Vagina (tissue), 2 donors: ENCODE measurements at regions of chr14 and their contacts with region 1.

Region 1: GRCh38 chr14:67943947-67944346 is 124.4 kb downstream of the RAD51B start:
- DNase-seq: no peak
- H3K4me3 ChIP-seq: no peak overlapping the region
- H3K27ac ChIP-seq: peak overlapping the region; percentile 88
- H3K4me1 ChIP-seq: peaks cover 41% of the 10 kb centered on the region
- H3K27me3 ChIP-seq: no peaks in the 10 kb centered on the region
- CTCF ChIP-seq: peak; percentile 59 to 90 (median 68)
- POLR2A ChIP-seq: no peak

Region 2: DNA sequence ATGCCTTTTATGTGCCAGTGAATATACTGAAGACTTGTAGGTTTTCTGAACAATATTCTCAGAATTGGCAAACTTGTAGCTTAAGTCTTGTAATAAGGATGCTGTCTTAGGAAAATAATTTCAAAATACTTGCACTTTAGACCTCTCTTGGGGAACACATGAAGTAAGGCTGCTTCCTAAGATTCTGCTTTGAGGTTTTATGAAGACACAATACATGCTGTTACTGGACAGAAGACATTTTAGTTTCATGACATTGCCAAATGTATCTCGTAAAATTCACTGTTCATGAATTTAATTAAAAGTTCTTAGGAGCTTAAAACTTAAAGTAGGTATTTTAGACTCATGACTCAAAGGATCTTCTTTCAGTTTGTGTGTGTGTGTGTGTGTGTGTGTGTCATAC is 43.7 kb before region 1 on chr14:
- intact Hi-C with region 1: no loop called
- DNase-seq: no peak
- H3K4me3 ChIP-seq: no peak overlapping the region
- H3K27ac ChIP-seq: no peak overlapping the region
- H3K4me1 ChIP-seq: no peaks in the 10 kb centered on the region
- H3K27me3 ChIP-seq: no peaks in the 10 kb centered on the region
- CTCF ChIP-seq: no peak
- POLR2A ChIP-seq: no peak

Region 3: DNA sequence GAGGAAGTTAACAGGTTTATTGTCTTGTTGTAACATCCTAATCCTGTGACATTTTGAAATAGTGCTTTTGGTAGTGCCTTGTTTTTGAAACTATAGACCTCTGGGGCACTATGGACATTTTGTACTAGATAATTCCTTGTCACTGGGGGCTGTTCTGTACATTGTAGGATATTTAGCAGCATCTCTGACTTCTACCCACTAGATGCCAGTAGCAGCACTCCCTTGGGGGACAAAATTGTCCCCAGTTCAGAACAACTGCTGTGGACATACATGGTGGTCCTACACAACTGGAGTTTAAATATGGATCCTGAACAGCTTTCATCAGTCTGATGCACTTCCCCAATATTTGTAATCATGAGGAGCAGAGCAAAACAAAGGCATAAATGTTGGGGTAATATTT is 140.3 kb after region 1 on chr14:
- intact Hi-C with region 1: no loop called
- DNase-seq: no peak
- H3K4me3 ChIP-seq: no peak overlapping the region
- H3K27ac ChIP-seq: no peak overlapping the region
- H3K4me1 ChIP-seq: peaks cover 11% of the 10 kb centered on the region
- H3K27me3 ChIP-seq: no peaks in the 10 kb centered on the region
- CTCF ChIP-seq: no peak
- POLR2A ChIP-seq: no peak

Region 4: GRCh38 chr14:68816262-68816942 is 872.5 kb after region 1 on chr14:
- intact Hi-C with region 1: loop called (anchors 2 kb)
- DNase-seq: no peak
- H3K4me3 ChIP-seq: peak overlapping the region; percentile 48 to 67
- H3K27ac ChIP-seq: peak overlapping the region; percentile 95
- H3K4me1 ChIP-seq: peaks cover 70% of the 10 kb centered on the region
- H3K27me3 ChIP-seq: no peaks in the 10 kb centered on the region
- CTCF ChIP-seq: peak; percentile 82 to 99 (median 96)
- POLR2A ChIP-seq: peak in 1 of 2 donors; percentile 36